ENCODE measurements at regions of chrX and their contacts with region 1.

Region 1: DNA sequence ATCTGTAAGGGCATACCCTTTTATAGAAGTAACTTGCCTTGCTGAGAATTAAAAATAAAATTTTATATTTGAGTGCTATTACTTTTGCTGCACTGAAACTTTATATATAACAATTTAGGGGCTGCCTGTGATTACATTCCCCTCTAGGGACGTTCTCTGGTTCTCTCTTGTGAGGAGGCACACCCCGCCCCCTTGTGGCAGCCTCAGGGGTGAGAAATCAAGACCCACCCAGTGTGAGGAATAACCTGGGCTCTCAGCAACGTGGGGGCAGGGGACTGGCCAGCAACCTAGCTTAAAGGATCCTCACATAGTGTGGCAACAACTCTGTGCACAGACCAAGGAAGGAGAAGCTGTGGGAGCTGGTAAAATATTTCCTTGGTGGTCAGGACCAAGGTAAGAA is 43.7 kb downstream of the MAGEA9 start:
- DNase-seq: no peak
- ATAC-seq: no peak
- H3K4me3 Mint-ChIP-seq: no peak overlapping the region
- H3K27ac Mint-ChIP-seq: no peak overlapping the region
- H3K4me1 Mint-ChIP-seq: peaks cover 17% of the 10 kb centered on the region
- H3K27me3 Mint-ChIP-seq: peaks cover 5% of the 10 kb centered on the region
- CTCF ChIP-seq: no peak

Region 2: GRCh38 chrX:149512225-149512885 is 313.1 kb before region 1 on chrX:
- CTCF ChIA-PET with region 1: no interaction called
- POLR2A ChIA-PET with region 1: no interaction called
- intact Hi-C with region 1: loop called (anchors 1 kb)
- DNase-seq: no peak
- ATAC-seq: peak; percentile 95
- H3K4me3 Mint-ChIP-seq: no peak overlapping the region
- H3K27ac Mint-ChIP-seq: no peak overlapping the region
- H3K4me1 Mint-ChIP-seq: peaks cover 3% of the 10 kb centered on the region
- H3K27me3 Mint-ChIP-seq: no peaks in the 10 kb centered on the region
- CTCF ChIP-seq: no peak

Region 3: GRCh38 chrX:150155436-150156035 is 330.1 kb after region 1 on chrX:
- CTCF ChIA-PET with region 1: no interaction called
- POLR2A ChIA-PET with region 1: no interaction called
- intact Hi-C with region 1: no loop called
- DNase-seq: no peak
- ATAC-seq: no peak
- H3K4me3 Mint-ChIP-seq: no peak overlapping the region
- H3K27ac Mint-ChIP-seq: no peak overlapping the region
- H3K4me1 Mint-ChIP-seq: no peaks in the 10 kb centered on the region
- H3K27me3 Mint-ChIP-seq: no peaks in the 10 kb centered on the region
- CTCF ChIP-seq: no peak

Region 4: GRCh38 chrX:150293357-150294013 is 468.1 kb after region 1 on chrX:
- CTCF ChIA-PET with region 1: no interaction called
- POLR2A ChIA-PET with region 1: no interaction called
- intact Hi-C with region 1: no loop called
- DNase-seq: no peak
- ATAC-seq: no peak
- H3K4me3 Mint-ChIP-seq: no peak overlapping the region
- H3K27ac Mint-ChIP-seq: no peak overlapping the region
- H3K4me1 Mint-ChIP-seq: no peaks in the 10 kb centered on the region
- H3K27me3 Mint-ChIP-seq: no peaks in the 10 kb centered on the region
- CTCF ChIP-seq: no peak